ENCODE measurements at regions of chr4 and their contacts with region 1.

Region 1: GRCh38 chr4:25234390-25235370 is 847 bp downstream of the PI4K2B start:
- DNase-seq: peak; percentile 34 to 62
- ATAC-seq: peak; percentile 66 to 82 (median 76)
- H3K4me3 ChIP-seq: peak overlapping the region; percentile 85 to 99 (median 96)
- H3K27ac ChIP-seq: peak overlapping the region; percentile 68 to 98 (median 96)
- H3K4me1 ChIP-seq: peaks cover 0 to 33% (median 15%) of the 10 kb centered on the region in 9 donors
- H3K27me3 ChIP-seq: no peaks in the 10 kb centered on the region
- CTCF ChIP-seq: peak; percentile 26 to 67 (median 50)

Region 2: GRCh38 chr4:25159884-25160713 is 74.6 kb before region 1 on chr4 and contains the start of gene SEPSECS:
- intact Hi-C with region 1: loop called in 6 of 10 experiments (anchors 1 to 5 kb)
- DNase-seq: peak; percentile 96 to 99
- ATAC-seq: peak; percentile 94 to 97 (median 96)
- H3K4me3 ChIP-seq: peak within 1 kb of the TSS; percentile 57 to 99 (median 82)
- H3K27ac ChIP-seq: peak within 1 kb of the TSS; percentile 79 to 99 (median 94)
- H3K4me1 ChIP-seq: peaks cover 0 to 37% (median 19%) of the 10 kb centered on the region in 9 donors
- H3K27me3 ChIP-seq: no peaks in the 10 kb centered on the region
- CTCF ChIP-seq: no peak
- total RNA-seq, gene SEPSECS: 2.9 to 9.1 (median 6.2) TPM

Region 3: DNA sequence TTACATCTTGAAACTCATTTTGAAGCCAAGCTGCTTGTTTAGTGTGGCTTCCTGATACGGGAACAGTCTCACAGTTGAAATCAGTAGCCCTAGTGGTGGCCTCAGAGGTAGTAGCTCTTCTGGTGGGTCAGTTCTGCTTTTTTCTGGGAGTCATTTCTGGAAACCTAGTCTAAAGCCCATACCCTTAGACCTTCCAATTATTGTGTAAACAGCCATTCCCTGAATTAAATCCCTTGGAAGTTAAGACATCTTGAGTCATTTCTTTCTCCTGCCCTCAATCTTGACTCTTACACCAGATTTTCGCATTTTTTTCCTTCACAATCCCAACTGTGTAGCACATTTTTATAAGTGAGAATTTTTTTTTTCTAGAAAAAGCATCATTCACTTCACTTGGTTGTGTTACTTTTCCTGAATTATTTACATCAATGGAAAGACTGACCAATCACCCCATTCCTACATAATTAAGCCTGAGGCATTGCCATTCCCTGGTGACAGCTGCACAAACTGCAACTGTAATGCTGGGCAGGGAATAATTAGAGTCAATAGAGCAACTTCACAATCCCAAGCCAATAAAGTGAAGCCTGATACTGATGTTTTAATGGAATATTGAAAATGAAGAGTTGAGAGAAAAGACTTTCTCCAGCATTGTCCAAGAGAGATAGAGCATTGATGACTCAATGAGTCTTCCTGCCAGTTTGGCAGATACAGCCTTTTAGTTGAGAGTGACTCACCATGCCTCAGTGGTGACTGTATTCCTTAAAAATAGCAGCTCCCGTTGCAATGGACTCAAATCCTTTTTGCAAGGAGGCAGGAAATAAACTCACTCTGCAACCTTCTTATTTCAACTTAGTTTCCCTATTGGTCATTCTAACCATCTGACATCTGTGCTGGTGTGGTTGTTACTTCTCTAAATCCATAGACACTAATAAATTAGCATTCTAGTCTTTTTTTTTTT is 61.4 kb before region 1 on chr4:
- intact Hi-C with region 1: loop called in 2 of 10 experiments (anchors 5 kb)
- DNase-seq: peak in 1 of 2 donors; percentile 77
- ATAC-seq: peak; percentile 95 to 98 (median 96)
- H3K4me3 ChIP-seq: no peak overlapping the region
- H3K27ac ChIP-seq: peak overlapping the region in 9 of 10 donors; percentile 49 to 85 (median 78)
- H3K4me1 ChIP-seq: peaks cover 0 to 40% (median 21%) of the 10 kb centered on the region in 9 donors
- H3K27me3 ChIP-seq: no peaks in the 10 kb centered on the region
- CTCF ChIP-seq: peak in 1 of 9 donors; percentile 19

Region 4: GRCh38 chr4:25180524-25181131 is 54.1 kb before region 1 on chr4:
- intact Hi-C with region 1: loop called in 1 of 10 experiments (anchors 5 kb)
- DNase-seq: no peak
- ATAC-seq: peak in 4 of 8 donors; percentile 52 to 77 (median 66)
- H3K4me3 ChIP-seq: no peak overlapping the region
- H3K27ac ChIP-seq: no peak overlapping the region
- H3K4me1 ChIP-seq: peaks cover 0 to 4% (median 0%) of the 10 kb centered on the region in 9 donors
- H3K27me3 ChIP-seq: no peaks in the 10 kb centered on the region
- CTCF ChIP-seq: peak in 8 of 9 donors; percentile 16 to 67 (median 60)

Region 5: DNA sequence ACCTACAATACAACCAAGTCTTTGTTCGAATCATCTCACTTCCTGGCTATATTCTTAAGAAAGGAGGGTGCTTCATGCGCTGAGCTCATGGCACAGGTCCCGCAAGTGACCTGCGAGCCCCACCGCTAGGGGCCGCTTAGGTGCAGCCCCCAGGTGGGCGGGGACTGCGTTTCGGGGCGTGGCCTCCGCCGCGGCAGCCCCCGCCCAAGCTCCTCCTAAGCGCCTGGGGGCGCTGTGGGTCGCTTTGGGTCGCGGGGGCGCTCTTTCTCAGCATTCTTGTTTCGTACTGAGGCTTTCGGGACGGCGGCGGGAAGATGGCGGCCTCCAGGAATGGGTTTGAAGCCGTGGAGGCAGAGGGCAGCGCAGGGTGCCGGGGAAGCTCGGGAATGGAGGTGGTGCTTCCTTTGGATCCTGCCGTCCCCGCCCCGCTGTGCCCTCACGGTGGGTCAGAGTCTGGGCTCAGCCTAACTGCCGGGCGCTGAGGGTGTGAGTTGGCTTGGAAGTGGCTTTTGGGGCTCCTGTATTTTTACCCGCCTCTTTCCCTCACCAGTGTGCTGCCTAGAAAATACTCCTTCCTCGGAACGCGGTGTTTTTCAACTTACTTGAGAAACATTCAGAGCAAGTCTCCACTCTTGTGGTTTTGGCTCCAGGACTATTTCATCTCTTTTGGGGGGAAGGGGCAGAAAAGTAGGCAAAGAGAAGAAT is 78.0 kb after region 1 on chr4 and contains the start of gene ZCCHC4:
- intact Hi-C with region 1: loop called in 3 of 10 experiments (anchors 2 to 5 kb)
- DNase-seq: peak; percentile 90
- ATAC-seq: peak; percentile 96 to 99 (median 99)
- H3K4me3 ChIP-seq: peak within 1 kb of the TSS; percentile 64 to 93 (median 75)
- H3K27ac ChIP-seq: peak within 1 kb of the TSS in 9 of 10 donors; percentile 32 to 87 (median 69)
- H3K4me1 ChIP-seq: peaks cover 2 to 26% (median 8%) of the 10 kb centered on the region in 9 donors
- H3K27me3 ChIP-seq: no peaks in the 10 kb centered on the region
- CTCF ChIP-seq: peak in 8 of 9 donors; percentile 96 to 100 (median 99)
- total RNA-seq, gene ZCCHC4: 6.8 to 9.6 (median 7.5) TPM

Region 6: GRCh38 chr4:25376754-25377571 is 142.3 kb after region 1 on chr4 and contains the start of gene ANAPC4:
- intact Hi-C with region 1: loop called in 1 of 10 experiments (anchors 10 kb)
- DNase-seq: peak; percentile 94 to 98
- ATAC-seq: peak; percentile 97 to 99 (median 98)
- H3K4me3 ChIP-seq: peak within 1 kb of the TSS; percentile 68 to 98 (median 90)
- H3K27ac ChIP-seq: peak within 1 kb of the TSS; percentile 22 to 90 (median 78)
- H3K4me1 ChIP-seq: peaks cover 0 to 33% (median 17%) of the 10 kb centered on the region in 9 donors
- H3K27me3 ChIP-seq: no peaks in the 10 kb centered on the region
- CTCF ChIP-seq: peak in 4 of 9 donors; percentile 18 to 32 (median 28)
- total RNA-seq, gene ANAPC4: 9.9 to 13.8 (median 11.5) TPM

Measured in heart right ventricle (tissue), 16 donors.